Activated CD8-positive, alpha-beta T cell treated with anti-CD3 and anti-CD28 coated beads for 36 hours (primary cell): ENCODE measurements at regions of chr15 and their contacts with region 1.

Region 1: DNA sequence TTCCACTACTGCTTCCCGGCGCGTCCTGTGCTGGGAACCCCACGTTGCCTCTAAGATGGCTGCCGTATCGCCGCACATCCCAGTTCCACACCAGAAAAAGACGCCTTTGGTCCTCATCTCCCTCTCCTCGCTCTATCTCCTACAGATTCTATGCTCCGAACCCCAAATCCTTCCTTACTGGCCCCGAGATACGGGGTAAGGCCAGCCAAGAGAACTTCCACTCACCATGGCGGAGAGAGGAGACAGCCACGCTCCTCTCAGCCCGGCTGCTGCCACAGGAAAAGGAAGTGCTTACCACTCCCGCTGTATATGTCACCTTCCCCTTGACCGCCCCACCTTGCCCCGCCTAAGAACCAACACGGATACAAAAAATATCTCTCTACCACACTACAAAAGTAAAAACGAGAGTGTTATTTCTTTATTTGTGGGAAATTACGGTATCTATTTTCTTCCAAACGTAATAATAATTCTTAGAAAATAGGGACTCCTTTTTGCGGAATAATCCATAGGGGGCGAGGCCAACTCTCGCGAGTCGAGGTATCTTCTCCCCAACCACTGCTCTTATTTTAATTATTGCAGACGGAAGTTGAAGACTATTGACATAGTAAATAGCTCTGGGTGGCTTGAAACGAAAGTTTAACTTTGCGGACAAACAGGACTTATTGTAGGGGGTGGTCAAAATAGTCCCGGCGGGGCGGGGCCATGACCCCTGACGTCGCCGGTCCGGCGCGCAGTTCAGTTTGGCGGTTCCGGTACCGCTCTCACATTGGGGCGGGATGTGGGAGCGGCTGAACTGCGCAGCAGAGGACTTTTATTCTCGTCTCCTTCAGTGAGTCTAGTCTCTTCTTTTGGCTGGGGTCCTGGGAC is at the starts of genes RPL4 and ZWILCH:
- DNase-seq: peak; percentile 80
- ATAC-seq: peak; percentile 90
- H3K4me3 Mint-ChIP-seq: peak within 1 kb of the TSS; percentile 99
- H3K27ac Mint-ChIP-seq: peak within 1 kb of the TSS; percentile 100
- H3K4me1 Mint-ChIP-seq: peaks cover 40% of the 10 kb centered on the region
- H3K27me3 Mint-ChIP-seq: no peaks in the 10 kb centered on the region
- CTCF ChIP-seq: no peak
- total RNA-seq, gene RPL4: 5,254 to 5,310 TPM
- total RNA-seq, gene ZWILCH: 29.9 to 30.2 TPM

Region 2: DNA sequence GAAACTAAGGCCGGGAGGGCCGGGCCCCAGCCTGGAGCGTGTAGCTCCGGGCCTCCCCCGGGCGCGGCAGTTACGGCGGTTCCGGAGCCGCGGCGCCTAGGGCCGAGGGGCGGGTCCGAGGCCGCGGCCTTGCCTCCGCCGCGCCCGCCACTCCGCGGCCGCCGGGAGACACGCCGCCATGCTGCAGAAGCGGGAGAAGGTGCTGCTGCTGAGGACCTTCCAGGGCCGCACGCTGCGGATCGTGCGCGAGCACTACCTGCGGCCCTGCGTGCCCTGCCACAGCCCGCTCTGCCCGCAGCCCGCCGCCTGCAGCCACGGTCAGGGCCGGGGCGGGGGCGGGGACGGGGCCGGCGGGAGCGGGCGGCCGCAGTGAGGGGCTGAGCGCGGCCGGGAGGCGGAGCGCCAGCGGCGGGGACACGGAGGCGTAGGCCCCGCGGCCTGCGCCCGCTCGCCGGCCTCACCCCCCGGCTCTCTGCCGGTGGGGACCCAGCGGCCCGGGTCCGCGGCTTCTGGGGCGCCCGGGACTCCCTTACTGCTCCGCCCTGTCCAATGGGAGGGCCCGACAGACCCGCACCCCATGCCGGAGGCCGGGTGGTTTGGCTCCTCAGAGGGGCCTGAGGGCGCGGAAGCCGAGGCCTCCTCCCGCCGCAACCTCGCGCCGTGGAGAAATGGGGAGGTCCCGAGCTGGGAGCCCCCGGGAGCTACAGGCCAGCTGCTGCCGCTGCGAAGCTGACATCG is 211.2 kb before region 1 on chr15 and contains the start of gene DIS3L:
- CTCF ChIA-PET with region 1: interaction called, 4 read pairs
- POLR2A ChIA-PET with region 1: interaction called, 17 read pairs
- intact Hi-C with region 1: loop called (anchors 5 kb)
- DNase-seq: peak; percentile 62
- ATAC-seq: peak; percentile 73
- H3K4me3 Mint-ChIP-seq: peak within 1 kb of the TSS; percentile 89
- H3K27ac Mint-ChIP-seq: peak within 1 kb of the TSS; percentile 94
- H3K4me1 Mint-ChIP-seq: peaks cover 42% of the 10 kb centered on the region
- H3K27me3 Mint-ChIP-seq: no peaks in the 10 kb centered on the region
- CTCF ChIP-seq: no peak
- total RNA-seq, gene DIS3L: 23.6 to 23.7 TPM

Region 3: GRCh38 chr15:66356345-66357236 is 148.2 kb before region 1 on chr15 and contains the start of gene TIPIN:
- CTCF ChIA-PET with region 1: interaction called, 39 read pairs
- POLR2A ChIA-PET with region 1: interaction called, 13 read pairs
- intact Hi-C with region 1: loop called (anchors 10 kb)
- DNase-seq: peak; percentile 99
- ATAC-seq: peak; percentile 97
- H3K4me3 Mint-ChIP-seq: peak within 1 kb of the TSS; percentile 94
- H3K27ac Mint-ChIP-seq: peak within 1 kb of the TSS; percentile 99
- H3K4me1 Mint-ChIP-seq: peaks cover 24% of the 10 kb centered on the region
- H3K27me3 Mint-ChIP-seq: no peaks in the 10 kb centered on the region
- CTCF ChIP-seq: no peak
- total RNA-seq, gene TIPIN: 49.8 to 50.1 TPM

Region 4: DNA sequence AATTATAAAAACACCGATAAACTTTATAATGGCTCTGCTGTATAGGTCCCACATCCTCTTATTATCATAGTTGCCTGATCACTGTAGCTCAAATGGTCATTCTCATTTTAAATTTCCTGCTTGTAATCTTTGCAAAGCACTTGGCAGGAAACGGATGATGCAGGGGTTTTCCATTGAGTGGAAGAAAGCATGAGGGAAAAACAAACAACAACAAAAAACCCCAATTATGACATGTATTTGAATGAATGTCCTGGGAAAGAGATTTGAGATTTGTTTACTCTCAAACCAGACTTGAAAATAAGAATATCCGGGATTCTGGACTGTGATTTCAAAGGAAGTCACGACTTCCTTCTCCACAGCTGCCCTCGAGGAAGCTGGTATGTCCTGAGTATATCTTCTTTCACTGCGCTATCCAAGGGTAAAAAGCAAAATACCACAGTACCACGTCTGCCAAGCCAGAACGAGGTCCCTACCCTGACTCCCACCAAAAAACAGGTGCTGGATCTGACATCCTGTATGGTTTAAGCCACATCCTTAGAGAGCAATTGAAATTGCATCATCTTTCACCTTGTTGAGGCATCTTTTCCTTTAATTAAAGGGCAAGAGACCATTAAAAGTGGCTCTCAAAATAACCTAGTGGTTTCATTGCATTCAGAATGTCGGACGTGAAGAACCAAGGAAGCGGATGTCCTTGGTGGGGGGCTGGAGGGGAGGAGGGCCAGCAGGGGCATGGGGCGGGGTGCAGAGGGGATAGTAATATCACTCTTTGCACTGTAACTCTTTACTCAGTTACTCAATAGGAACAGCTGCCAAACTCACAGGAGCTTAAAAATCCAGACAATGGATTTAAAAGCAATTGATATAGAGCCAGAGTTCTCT is 134.8 kb before region 1 on chr15:
- CTCF ChIA-PET with region 1: no interaction called
- POLR2A ChIA-PET with region 1: interaction called, 12 read pairs
- intact Hi-C with region 1: no loop called
- DNase-seq: peak; percentile 70
- ATAC-seq: peak; percentile 93
- H3K4me3 Mint-ChIP-seq: peak overlapping the region; percentile 49
- H3K27ac Mint-ChIP-seq: peak overlapping the region; percentile 90
- H3K4me1 Mint-ChIP-seq: peaks cover 14% of the 10 kb centered on the region
- H3K27me3 Mint-ChIP-seq: no peaks in the 10 kb centered on the region
- CTCF ChIP-seq: no peak

Region 5: DNA sequence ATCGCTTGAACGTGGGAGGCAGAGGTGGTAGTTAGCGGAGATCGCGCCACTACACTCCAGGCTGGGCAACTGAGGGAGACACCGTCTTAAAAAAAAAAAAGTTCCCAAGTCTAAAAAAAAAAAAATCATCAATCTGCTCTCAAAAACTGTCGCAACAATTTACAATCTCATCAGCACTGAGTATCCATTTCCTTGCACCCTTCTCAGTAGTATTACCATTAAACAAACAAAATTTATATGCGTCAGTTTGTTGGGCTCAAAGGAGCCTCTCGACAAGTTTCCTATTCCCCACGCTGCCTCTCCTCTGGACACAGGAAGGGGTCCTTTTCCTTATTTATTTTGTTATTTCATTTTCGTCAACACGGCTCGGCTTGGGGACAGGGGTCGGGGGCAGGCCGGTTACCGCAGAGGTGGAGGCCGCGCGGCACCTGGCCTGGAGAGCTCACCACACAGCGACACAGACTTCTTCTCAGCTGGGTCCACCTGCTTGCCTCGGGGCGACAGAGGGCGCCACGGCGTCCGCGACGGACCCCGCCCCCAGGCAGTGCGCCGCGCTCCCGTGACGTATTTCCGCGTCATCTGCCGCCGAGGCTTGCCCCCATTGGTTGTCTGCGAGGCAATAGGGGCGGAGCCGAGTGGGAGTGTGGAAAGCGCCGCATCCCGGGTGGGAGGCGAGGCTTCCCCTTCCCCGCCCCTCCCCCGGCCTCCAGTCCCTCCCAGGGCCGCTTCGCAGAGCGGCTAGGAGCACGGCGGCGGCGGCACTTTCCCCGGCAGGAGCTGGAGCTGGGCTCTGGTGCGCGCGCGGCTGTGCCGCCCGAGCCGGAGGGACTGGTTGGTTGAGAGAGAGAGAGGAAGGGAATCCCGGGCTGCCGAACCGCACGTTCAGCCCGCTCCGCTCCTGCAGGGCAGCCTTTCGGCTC is 118.3 kb before region 1 on chr15 and contains the start of gene MAP2K1:
- CTCF ChIA-PET with region 1: interaction called, 65 read pairs
- POLR2A ChIA-PET with region 1: interaction called, 65 read pairs
- intact Hi-C with region 1: loop called (anchors 5 kb)
- DNase-seq: peak; percentile 98
- ATAC-seq: peak; percentile 87
- H3K4me3 Mint-ChIP-seq: peak within 1 kb of the TSS; percentile 95
- H3K27ac Mint-ChIP-seq: peak within 1 kb of the TSS; percentile 100
- H3K4me1 Mint-ChIP-seq: peaks cover 40% of the 10 kb centered on the region
- H3K27me3 Mint-ChIP-seq: no peaks in the 10 kb centered on the region
- CTCF ChIP-seq: peak; percentile 69
- total RNA-seq, gene MAP2K1: 117 to 118 TPM

Region 6: DNA sequence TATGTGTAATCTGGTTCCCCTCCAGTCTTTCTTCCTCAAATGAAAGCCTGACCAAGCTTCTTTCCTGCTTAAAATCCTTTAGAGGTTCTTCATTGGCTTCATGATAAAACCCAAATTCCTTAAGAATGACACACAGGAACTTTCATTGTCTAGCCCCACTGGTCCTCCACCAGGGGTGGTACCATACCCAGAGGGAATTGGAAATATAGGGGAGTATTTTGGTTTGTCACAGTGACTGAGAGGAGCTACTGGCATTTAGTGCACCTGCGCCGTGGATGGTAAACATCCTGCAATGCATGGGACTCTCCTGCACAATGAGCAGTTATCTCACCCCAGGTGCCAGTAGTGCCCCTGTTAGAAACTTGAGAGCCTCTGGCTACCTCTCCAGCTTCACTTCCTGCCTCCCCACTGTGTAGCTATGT is 11.1 kb after region 1 on chr15:
- CTCF ChIA-PET with region 1: interaction called, 3 read pairs
- POLR2A ChIA-PET with region 1: interaction called, 10 read pairs
- intact Hi-C with region 1: no loop called
- DNase-seq: no peak
- ATAC-seq: no peak
- H3K4me3 Mint-ChIP-seq: no peak overlapping the region
- H3K27ac Mint-ChIP-seq: no peak overlapping the region
- H3K4me1 Mint-ChIP-seq: no peaks in the 10 kb centered on the region
- H3K27me3 Mint-ChIP-seq: no peaks in the 10 kb centered on the region
- CTCF ChIP-seq: no peak

Region 7: GRCh38 chr15:66566963-66567531 is 62.3 kb after region 1 on chr15:
- CTCF ChIA-PET with region 1: no interaction called
- POLR2A ChIA-PET with region 1: no interaction called
- intact Hi-C with region 1: no loop called
- DNase-seq: peak; percentile 68
- ATAC-seq: peak; percentile 72
- H3K4me3 Mint-ChIP-seq: no peak overlapping the region
- H3K27ac Mint-ChIP-seq: no peak overlapping the region
- H3K4me1 Mint-ChIP-seq: no peaks in the 10 kb centered on the region
- H3K27me3 Mint-ChIP-seq: no peaks in the 10 kb centered on the region
- CTCF ChIP-seq: peak; percentile 53